ENCODE measurements at regions of chr6 and their contacts with region 1.

Region 1: DNA sequence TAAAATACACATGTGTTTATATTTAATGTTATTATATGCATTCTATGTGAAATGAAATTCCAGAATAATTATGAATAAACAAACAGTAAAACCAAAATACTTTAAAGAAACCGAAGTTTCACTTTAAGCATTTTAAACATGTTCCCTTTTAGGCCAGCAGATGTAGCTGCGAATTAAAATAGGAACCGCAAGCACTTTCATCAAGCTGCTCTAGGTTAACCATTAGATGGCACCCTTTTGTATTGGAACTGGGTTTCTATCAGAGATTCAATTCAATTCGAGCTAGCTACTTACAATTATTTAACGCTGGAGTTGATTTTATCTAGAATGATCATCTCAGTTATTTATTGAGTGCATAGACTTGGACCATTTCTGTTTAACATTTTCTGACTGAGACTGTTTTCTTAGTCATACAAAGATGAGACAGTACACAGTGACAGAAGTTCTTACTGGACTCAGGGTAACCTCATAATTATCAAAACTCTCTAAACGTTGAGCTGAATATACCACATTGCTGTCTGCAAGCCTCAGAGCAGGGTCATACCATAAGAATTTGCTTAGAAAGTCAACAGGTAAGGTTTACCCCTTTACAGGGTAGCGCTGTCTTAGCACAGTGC is 8.5 kb downstream of the TMEM242 start:
- DNase-seq: peak; percentile 68
- CTCF ChIP-seq: peak; percentile 87

Region 2: GRCh38 chr6:157669747-157670216 is 355.0 kb after region 1 on chr6:
- in situ Hi-C with region 1: loop called (anchors 10 kb)
- DNase-seq: no peak
- CTCF ChIP-seq: no peak